ENCODE measurements at regions of chr16 and their contacts with region 1.

Region 1: GRCh38 chr16:8720080-8720966 is 45.9 kb downstream of the ABAT start:
- DNase-seq: peak; percentile 85
- ATAC-seq: peak; percentile 91
- H3K4me3 ChIP-seq: no peak overlapping the region
- H3K27ac ChIP-seq: no peak overlapping the region
- H3K4me1 ChIP-seq: peaks cover 26% of the 10 kb centered on the region
- H3K27me3 ChIP-seq: no peaks in the 10 kb centered on the region
- CTCF ChIP-seq: no peak
- EP300 ChIP-seq: no peak
- POLR2A ChIP-seq: no peak
- RAD21 ChIP-seq: peak; percentile 21; the same call in 1 of the 2 replicates

Region 2: DNA sequence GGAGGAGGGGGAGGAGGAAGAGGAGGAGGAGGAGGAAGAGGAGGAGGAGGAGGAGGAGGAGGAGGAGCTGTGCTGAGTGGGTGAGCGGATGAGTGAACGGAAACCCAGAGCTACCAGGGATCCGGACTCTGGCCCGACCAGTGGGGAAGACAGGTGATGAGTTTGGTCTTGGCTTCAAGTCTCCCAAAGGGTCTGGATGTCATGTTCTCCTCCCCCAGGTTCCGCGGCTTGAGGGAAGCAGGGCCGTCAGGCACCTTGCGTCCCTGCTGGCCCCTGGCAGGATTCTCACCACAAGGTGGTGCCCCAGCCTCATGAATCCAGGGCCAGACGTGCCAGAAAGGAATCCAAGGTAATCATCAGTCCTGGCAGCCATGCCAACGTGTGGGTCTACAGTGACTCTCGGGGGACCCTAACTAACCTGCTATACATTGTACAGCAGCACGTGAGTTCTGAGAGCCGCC is 59.5 kb before region 1 on chr16:
- CTCF ChIA-PET with region 1: no interaction called
- POLR2A ChIA-PET with region 1: no interaction called
- in situ Hi-C with region 1: no loop called
- intact Hi-C with region 1: loop called (anchors 5 kb)
- DNase-seq: peak; percentile 71
- ATAC-seq: peak; percentile 88
- H3K4me3 ChIP-seq: peak overlapping the region in 1 of 3 experiments; percentile 17; a peak in 1 of 6 replicates
- H3K27ac ChIP-seq: no peak overlapping the region
- H3K4me1 ChIP-seq: no peaks in the 10 kb centered on the region
- H3K27me3 ChIP-seq: peaks cover 0 to 2% of the 10 kb centered on the region in 2 experiments; a peak in 2 of 5 replicates
- CTCF ChIP-seq: peak; percentile 99
- EP300 ChIP-seq: no peak
- POLR2A ChIP-seq: no peak
- RAD21 ChIP-seq: peak; percentile 99

Region 3: GRCh38 chr16:8740775-8741355 is 20.5 kb after region 1 on chr16:
- CTCF ChIA-PET with region 1: no interaction called
- POLR2A ChIA-PET with region 1: no interaction called
- in situ Hi-C with region 1: no loop called
- intact Hi-C with region 1: loop called (anchors 1 kb)
- DNase-seq: peak; percentile 100
- ATAC-seq: peak; percentile 99
- H3K4me3 ChIP-seq: peak overlapping the region in 1 of 3 experiments; percentile 0; a peak in 1 of 6 replicates
- H3K27ac ChIP-seq: peak overlapping the region; percentile 48
- H3K4me1 ChIP-seq: peaks cover 34% of the 10 kb centered on the region
- H3K27me3 ChIP-seq: no peaks in the 10 kb centered on the region
- CTCF ChIP-seq: no peak
- EP300 ChIP-seq: peak in 1 of 2 experiments; percentile 86; a peak in 2 of 4 replicates
- POLR2A ChIP-seq: peak in 1 of 2 experiments; percentile 35; a peak in 1 of 4 replicates
- RAD21 ChIP-seq: peak; percentile 64

Region 4: DNA sequence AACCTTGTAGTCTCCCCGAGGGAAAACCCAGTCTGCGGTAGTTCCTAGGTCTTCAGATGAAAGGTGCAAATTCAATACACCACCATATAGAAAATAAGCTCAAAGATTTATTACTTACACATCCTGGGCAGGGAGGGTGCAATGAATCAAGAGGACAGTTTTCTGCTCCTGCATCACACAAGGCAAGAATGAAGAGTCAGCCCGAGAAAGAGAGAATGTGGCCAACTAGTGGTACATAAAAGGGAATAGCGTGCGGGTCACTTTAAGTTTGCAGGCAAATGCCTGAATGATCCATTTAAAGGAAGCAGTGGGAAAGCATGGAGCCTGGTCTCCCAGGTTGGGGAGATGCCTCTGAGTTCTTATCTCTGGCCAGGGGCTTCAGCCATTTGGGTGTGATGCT is 1058.5 kb after region 1 on chr16:
- CTCF ChIA-PET with region 1: no interaction called
- POLR2A ChIA-PET with region 1: no interaction called
- in situ Hi-C with region 1: no loop called
- intact Hi-C with region 1: loop called (anchors 5 kb)
- DNase-seq: no peak
- ATAC-seq: no peak
- H3K4me3 ChIP-seq: no peak overlapping the region
- H3K27ac ChIP-seq: no peak overlapping the region
- H3K4me1 ChIP-seq: no peaks in the 10 kb centered on the region
- H3K27me3 ChIP-seq: peaks cover 0 to 14% of the 10 kb centered on the region in 2 experiments; a peak in 2 of 5 replicates
- CTCF ChIP-seq: no peak
- EP300 ChIP-seq: no peak
- POLR2A ChIP-seq: no peak
- RAD21 ChIP-seq: no peak

Measured in HepG2 (cell line).